Endothelial cell of umbilical vein (primary cell): ENCODE measurements at regions of chr3 and their contacts with region 1.

Region 1: DNA sequence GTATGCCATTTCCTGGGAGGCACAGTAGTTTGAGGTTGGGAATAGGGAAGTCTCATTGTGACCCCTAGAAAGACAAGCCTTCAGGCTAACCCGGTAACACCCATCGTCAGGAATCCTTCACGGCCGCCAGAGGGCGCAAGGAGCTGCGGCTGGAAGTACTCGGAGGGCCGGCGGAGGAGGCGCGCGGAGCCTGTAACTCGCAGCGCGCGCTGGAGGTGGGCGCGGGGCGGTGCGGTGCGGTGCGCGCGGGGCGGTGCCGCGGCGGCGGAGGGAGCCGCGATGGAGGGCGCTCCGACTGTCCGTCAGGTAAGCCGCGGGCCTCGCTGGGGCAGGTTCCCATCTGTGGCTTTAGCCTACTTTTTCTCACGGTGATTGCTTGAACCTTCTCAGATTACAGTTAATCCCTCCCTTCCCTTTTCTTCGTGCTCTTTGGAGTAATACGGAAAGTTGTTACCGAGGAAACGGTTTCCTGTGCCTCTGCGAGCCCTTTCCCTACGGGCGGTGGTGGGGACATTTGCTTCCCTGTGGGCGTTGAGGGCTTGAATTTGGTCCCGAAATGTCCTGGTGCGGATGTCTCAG is at the start of gene GRAMD1C:
- DNase-seq: peak; percentile 91
- H3K4me3 ChIP-seq: peak within 1 kb of the TSS; percentile 67 to 80 (median 69)
- H3K27ac ChIP-seq: peak within 1 kb of the TSS; percentile 83
- H3K4me1 ChIP-seq: no peaks in the 10 kb centered on the region
- H3K27me3 ChIP-seq: no peaks in the 10 kb centered on the region
- CTCF ChIP-seq: peak; percentile 85 to 93
- POLR2A ChIP-seq: peak; percentile 61
- total RNA-seq, gene GRAMD1C: 17.0 and 24.0 TPM in 2 replicates

Region 2: GRCh38 chr3:113495035-113495434 is 343.7 kb before region 1 on chr3:
- CTCF ChIA-PET with region 1: no interaction called
- POLR2A ChIA-PET with region 1: no interaction called
- dilution Hi-C with region 1: no loop called
- intact Hi-C with region 1: loop called (anchors 2 kb)
- DNase-seq: peak; percentile 61
- H3K4me3 ChIP-seq: no peak overlapping the region
- H3K27ac ChIP-seq: no peak overlapping the region
- H3K4me1 ChIP-seq: peaks cover 25% of the 10 kb centered on the region
- H3K27me3 ChIP-seq: no peaks in the 10 kb centered on the region
- CTCF ChIP-seq: peak in 1 of 2 donors; percentile 38
- POLR2A ChIP-seq: no peak

Region 3: GRCh38 chr3:113736548-113737089 is 102.1 kb before region 1 on chr3:
- CTCF ChIA-PET with region 1: interaction called, 30 read pairs
- POLR2A ChIA-PET with region 1: no interaction called
- dilution Hi-C with region 1: no loop called
- intact Hi-C with region 1: loop called (anchors 1 kb)
- DNase-seq: peak; percentile 79
- H3K4me3 ChIP-seq: no peak overlapping the region
- H3K27ac ChIP-seq: no peak overlapping the region
- H3K4me1 ChIP-seq: peaks cover 10% of the 10 kb centered on the region
- H3K27me3 ChIP-seq: no peaks in the 10 kb centered on the region
- CTCF ChIP-seq: peak; percentile 28 to 47
- POLR2A ChIP-seq: no peak

Region 4: DNA sequence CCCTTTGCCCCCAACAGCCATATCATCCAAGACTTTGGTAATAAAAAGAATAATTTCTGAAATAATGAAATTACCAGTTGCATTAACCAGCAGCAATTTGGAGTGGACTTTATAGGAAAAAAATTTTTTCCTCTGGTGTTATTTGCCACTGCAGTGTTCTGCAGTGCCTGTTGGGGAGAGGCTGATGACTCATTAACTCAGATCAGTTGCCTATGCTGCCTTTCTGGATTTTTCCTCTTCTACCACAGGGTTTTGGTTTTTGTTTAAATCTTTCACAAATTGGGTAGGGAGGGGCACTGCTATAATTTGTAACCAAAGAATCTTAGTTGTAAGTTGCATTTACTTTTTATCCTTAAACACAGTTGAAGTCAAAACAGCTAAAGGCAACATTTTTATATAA is 69.2 kb before region 1 on chr3:
- CTCF ChIA-PET with region 1: no interaction called
- POLR2A ChIA-PET with region 1: no interaction called
- dilution Hi-C with region 1: no loop called
- intact Hi-C with region 1: no loop called
- DNase-seq: peak; percentile 35
- H3K4me3 ChIP-seq: no peak overlapping the region
- H3K27ac ChIP-seq: no peak overlapping the region
- H3K4me1 ChIP-seq: no peaks in the 10 kb centered on the region
- H3K27me3 ChIP-seq: no peaks in the 10 kb centered on the region
- CTCF ChIP-seq: no peak
- POLR2A ChIP-seq: no peak

Region 5: DNA sequence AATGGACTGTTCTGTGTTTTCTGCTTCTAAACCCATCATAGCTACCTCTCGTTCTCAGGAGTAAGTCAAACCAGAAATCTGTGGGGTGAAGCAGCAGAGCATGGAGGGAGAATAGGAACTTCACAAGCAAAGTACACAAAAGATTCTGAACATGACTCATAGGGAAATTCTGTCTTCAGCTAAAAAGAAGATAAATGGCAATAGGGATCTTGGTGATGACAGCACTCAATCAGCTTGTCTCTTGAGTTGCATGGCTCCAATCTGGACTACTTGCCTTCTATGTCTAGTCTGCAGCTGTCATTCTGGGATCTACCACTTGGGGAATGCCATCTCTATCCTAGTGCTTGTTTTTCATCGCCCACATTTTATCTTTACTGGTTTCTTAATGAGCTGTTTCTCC is 13.6 kb before region 1 on chr3:
- CTCF ChIA-PET with region 1: interaction called, 11 read pairs
- POLR2A ChIA-PET with region 1: no interaction called
- dilution Hi-C with region 1: no loop called
- intact Hi-C with region 1: no loop called
- DNase-seq: peak; percentile 45
- H3K4me3 ChIP-seq: no peak overlapping the region
- H3K27ac ChIP-seq: no peak overlapping the region
- H3K4me1 ChIP-seq: peaks cover 10% of the 10 kb centered on the region
- H3K27me3 ChIP-seq: no peaks in the 10 kb centered on the region
- CTCF ChIP-seq: peak in 1 of 2 donors; percentile 20
- POLR2A ChIP-seq: no peak

Region 6: GRCh38 chr3:113867506-113867905 is 28.8 kb after region 1 on chr3:
- CTCF ChIA-PET with region 1: no interaction called
- POLR2A ChIA-PET with region 1: no interaction called
- dilution Hi-C with region 1: no loop called
- intact Hi-C with region 1: no loop called
- DNase-seq: no peak
- H3K4me3 ChIP-seq: no peak overlapping the region
- H3K27ac ChIP-seq: no peak overlapping the region
- H3K4me1 ChIP-seq: peaks cover 4% of the 10 kb centered on the region
- H3K27me3 ChIP-seq: no peaks in the 10 kb centered on the region
- CTCF ChIP-seq: no peak
- POLR2A ChIP-seq: no peak

Region 7: DNA sequence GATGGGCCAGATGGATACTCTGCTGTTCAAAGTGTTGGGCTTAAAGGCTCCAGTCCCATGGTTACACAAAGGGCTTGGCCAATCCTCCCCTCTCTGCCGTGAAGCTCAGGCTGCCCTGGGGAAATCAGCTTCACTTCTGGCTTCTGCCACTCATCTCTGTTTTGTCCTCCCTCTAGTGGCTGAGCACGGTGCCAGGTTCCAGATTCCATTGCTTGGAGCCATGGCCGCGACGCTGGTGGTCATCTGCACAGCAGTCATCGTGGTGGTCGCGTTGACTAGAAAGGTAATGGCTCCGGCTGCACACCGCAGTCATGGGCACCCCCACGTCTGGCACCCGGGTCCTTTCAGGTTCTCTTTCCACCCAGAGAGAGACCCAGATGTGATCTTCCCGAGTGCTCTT is 460.7 kb after region 1 on chr3:
- CTCF ChIA-PET with region 1: interaction called, 15 read pairs
- POLR2A ChIA-PET with region 1: no interaction called
- dilution Hi-C with region 1: no loop called
- intact Hi-C with region 1: loop called (anchors 10 kb)
- DNase-seq: peak; percentile 39
- H3K4me3 ChIP-seq: no peak overlapping the region
- H3K27ac ChIP-seq: no peak overlapping the region
- H3K4me1 ChIP-seq: no peaks in the 10 kb centered on the region
- H3K27me3 ChIP-seq: peaks cover 8% of the 10 kb centered on the region in 2 experiments
- CTCF ChIP-seq: peak; percentile 42 to 67
- POLR2A ChIP-seq: no peak